Ovary (tissue), 10 donors: ENCODE measurements at regions of chr2 and their contacts with region 1.

Region 1: DNA sequence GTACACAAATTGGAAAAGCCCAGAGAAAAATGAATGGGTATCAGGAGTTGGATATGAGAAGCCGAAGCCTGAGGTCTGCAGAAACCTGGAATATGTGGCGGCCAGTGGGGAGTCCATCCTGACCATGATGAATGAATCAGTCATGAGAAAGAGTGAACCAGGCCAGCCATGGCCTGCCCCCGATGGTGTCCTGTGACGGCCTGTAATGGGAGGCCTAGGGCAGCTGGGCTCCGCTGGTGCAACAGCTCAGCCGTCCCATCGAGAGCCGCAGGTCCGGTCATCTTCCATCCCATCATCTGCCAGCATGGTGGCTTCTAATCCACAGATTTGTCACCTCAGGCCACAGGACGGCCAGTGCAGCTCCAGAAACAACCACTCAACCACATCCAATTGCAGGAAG is 116.4 kb downstream of the PDCL3 start:
- DNase-seq: no peak
- H3K4me3 ChIP-seq: no peak overlapping the region
- H3K27ac ChIP-seq: no peak overlapping the region
- H3K4me1 ChIP-seq: no peaks in the 10 kb centered on the region
- H3K27me3 ChIP-seq: no peaks in the 10 kb centered on the region
- CTCF ChIP-seq: no peak
- EP300 ChIP-seq: no peak
- POLR2A ChIP-seq: no peak

Region 2: DNA sequence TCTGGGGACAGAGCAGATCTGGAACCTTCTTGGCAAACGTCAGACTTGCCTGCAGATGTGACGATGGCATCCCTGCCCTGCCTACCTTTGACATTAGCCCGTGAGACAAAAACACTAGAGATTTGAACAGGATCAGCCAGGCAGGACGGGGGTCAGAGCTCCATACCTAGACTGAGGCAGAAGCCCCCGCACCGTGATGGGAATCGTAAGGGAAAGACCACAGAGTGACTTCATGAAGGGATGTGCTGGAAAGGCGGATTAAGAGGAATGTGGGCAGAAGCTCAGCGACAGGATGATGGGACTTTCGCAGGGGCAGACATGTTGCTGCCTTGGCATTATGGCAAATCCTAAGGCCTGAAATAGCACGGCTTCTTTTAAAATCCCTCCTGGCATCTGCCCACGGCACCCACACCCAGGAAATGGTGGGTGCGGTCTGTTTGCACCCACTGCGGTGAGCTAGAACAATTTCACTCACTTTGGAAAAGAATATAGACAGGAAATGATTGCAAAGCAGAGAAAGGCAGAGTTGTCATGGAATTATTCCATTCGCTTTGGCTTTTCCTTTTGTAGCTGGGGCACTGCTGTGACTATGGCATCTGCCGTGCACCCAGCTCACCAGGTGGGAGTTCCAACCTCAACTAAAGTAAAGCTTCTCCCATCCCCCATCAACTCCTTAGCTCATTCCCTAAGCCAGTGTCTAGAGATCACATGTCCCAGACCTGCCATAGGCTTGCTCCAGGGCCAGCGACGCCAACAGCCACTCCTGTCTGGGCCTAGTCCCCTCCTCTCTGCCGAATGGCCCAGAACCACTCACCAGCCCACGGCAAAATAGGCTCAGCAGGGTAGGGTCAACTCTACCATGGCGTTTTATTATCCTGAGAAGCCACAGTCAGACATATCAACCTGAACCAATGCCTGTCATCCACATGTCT is 28.1 kb after region 1 on chr2:
- intact Hi-C with region 1: loop called in 1 of 4 experiments (anchors 2 kb)
- DNase-seq: no peak
- H3K4me3 ChIP-seq: no peak overlapping the region
- H3K27ac ChIP-seq: no peak overlapping the region
- H3K4me1 ChIP-seq: no peaks in the 10 kb centered on the region
- H3K27me3 ChIP-seq: no peaks in the 10 kb centered on the region
- CTCF ChIP-seq: no peak
- EP300 ChIP-seq: no peak
- POLR2A ChIP-seq: no peak